ENCODE measurements at regions of chr10 and their contacts with region 1.

Region 1: DNA sequence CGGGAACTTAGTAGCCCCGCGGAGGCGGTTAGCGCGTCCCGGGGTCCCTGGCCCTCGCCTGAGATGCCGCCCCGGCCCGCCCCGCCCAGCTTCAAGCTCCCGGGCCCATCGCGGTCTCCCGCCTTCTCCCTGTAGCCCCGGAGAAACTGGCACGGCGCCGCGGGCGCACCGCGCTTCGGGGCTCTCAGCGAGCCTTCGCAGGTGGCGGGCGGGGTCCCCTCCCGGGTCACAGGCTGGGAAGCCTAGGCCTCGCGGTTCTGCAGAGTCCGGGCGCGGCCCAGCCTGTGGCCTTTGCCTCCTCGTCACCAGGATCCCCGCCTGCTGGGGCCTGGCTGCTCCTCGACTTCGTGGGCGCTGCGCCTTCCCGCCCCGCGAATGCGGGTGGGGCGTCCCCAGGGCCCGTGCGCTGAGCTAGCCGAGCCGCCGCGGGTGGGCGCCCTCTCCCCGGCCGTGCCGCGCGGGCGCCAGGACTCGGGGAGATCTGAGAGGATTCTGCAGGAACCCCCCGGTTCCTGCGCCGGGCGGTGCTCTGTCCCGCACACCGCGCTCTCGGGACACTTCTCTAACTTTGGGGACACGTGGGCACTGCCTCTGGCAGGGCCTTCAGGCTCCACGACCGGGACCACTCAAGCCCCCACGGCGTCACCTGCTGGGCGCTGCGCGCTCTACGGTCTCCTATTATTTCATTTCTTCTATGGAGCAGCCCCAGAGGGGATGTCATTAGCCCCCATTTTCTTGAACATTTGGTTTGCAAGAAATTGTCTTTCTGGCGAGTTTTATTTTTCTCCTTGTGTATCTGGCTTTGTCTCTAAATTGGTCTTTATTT is 682 bp upstream of the RGS10 start:
- DNase-seq: peak; percentile 48
- H3K4me3 ChIP-seq: peak overlapping the region; percentile 65 to 81 (median 67)
- H3K27ac ChIP-seq: no peak overlapping the region
- H3K4me1 ChIP-seq: peaks cover 6% of the 10 kb centered on the region
- H3K27me3 ChIP-seq: peaks cover 3 to 4% of the 10 kb centered on the region in 2 experiments
- CTCF ChIP-seq: peak; percentile 48 to 67
- POLR2A ChIP-seq: peak; percentile 13

Region 2: DNA sequence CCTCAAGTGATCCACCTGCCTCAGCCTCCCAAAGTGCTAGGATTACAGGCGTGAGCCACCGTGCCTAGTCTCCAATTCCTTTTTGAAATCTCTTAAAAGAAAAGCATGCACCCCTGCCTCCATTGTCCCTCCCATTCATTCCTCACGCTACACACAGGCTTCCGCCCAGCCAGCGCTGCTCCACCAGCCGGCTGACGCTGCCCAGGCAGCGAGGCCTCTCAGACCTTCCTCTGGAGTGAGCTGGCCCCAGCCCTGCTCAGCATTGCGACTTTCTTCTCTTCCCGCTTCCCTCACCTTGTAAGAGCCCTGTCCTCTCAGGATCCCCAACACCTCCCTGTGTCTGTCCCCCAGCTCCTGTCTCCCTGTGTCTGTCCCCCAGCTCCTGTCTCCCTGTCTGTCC is 24.3 kb before region 1 on chr10:
- CTCF ChIA-PET with region 1: interaction called, 11 read pairs
- POLR2A ChIA-PET with region 1: no interaction called
- dilution Hi-C with region 1: no loop called
- intact Hi-C with region 1: no loop called
- DNase-seq: no peak
- H3K4me3 ChIP-seq: no peak overlapping the region
- H3K27ac ChIP-seq: no peak overlapping the region
- H3K4me1 ChIP-seq: peaks cover 36% of the 10 kb centered on the region
- H3K27me3 ChIP-seq: no peaks in the 10 kb centered on the region
- CTCF ChIP-seq: no peak
- POLR2A ChIP-seq: no peak

Region 3: DNA sequence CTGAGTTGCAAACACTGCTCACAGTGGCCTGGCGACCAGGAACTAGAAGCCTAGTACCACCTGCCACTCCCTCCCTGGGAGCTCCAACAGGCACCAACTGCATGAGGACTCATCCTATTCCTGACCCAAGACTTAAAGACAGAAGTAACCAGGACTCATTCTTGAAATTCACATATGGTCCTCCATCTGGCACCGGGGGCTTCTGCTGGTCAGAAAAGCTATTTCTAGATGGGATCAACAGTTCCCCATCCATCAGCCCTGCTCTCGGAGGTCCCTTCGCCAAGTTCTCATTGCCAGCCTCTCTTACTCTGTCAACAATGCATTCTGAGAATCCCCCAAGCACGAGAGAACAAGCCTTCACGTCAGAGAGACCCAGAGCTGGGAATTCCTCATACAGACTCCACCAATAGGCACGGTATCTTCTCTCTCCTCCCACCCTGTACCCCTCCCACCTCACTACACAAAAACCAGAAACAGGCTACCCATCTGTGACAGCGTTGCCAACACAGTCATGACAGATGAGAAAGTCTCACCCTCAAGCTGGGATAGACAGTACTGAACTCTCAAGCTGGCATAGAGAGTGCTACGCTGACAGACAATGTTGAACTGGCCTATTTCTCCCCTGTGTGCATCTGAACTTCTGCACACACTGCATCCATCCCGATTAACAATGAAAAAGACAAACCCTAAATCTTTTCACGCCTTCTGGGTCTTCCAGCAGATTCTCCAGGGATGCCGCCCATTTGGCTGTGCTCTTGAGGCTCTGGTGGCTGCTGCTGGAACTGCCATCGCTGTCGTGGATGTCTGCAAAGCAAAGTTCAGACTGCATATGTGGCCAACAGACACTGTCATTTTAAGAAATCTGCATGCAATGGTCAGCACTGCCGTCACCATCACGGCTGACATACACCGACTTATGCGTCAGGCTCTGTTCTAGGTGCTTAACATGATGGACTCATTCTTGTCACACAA is 16.3 kb before region 1 on chr10:
- CTCF ChIA-PET with region 1: interaction called, 11 read pairs
- POLR2A ChIA-PET with region 1: no interaction called
- dilution Hi-C with region 1: no loop called
- intact Hi-C with region 1: no loop called
- DNase-seq: no peak
- H3K4me3 ChIP-seq: no peak overlapping the region
- H3K27ac ChIP-seq: no peak overlapping the region
- H3K4me1 ChIP-seq: peaks cover 4% of the 10 kb centered on the region
- H3K27me3 ChIP-seq: no peaks in the 10 kb centered on the region
- CTCF ChIP-seq: no peak
- POLR2A ChIP-seq: no peak

Region 4: GRCh38 chr10:119575506-119575905 is 32.3 kb after region 1 on chr10:
- CTCF ChIA-PET with region 1: interaction called, 15 read pairs
- POLR2A ChIA-PET with region 1: no interaction called
- dilution Hi-C with region 1: no loop called
- intact Hi-C with region 1: no loop called
- DNase-seq: no peak
- H3K4me3 ChIP-seq: no peak overlapping the region
- H3K27ac ChIP-seq: no peak overlapping the region
- H3K4me1 ChIP-seq: no peaks in the 10 kb centered on the region
- H3K27me3 ChIP-seq: no peaks in the 10 kb centered on the region
- CTCF ChIP-seq: no peak
- POLR2A ChIP-seq: no peak

Region 5: GRCh38 chr10:119933179-119933578 is 390.0 kb after region 1 on chr10:
- CTCF ChIA-PET with region 1: no interaction called
- POLR2A ChIA-PET with region 1: no interaction called
- dilution Hi-C with region 1: no loop called
- intact Hi-C with region 1: no loop called
- DNase-seq: peak; percentile 19
- H3K4me3 ChIP-seq: no peak overlapping the region
- H3K27ac ChIP-seq: no peak overlapping the region
- H3K4me1 ChIP-seq: no peaks in the 10 kb centered on the region
- H3K27me3 ChIP-seq: no peaks in the 10 kb centered on the region
- CTCF ChIP-seq: peak in 1 of 2 donors; percentile 3
- POLR2A ChIP-seq: no peak